ENCODE measurements at regions of chr5 and their contacts with region 1.

Region 1: DNA sequence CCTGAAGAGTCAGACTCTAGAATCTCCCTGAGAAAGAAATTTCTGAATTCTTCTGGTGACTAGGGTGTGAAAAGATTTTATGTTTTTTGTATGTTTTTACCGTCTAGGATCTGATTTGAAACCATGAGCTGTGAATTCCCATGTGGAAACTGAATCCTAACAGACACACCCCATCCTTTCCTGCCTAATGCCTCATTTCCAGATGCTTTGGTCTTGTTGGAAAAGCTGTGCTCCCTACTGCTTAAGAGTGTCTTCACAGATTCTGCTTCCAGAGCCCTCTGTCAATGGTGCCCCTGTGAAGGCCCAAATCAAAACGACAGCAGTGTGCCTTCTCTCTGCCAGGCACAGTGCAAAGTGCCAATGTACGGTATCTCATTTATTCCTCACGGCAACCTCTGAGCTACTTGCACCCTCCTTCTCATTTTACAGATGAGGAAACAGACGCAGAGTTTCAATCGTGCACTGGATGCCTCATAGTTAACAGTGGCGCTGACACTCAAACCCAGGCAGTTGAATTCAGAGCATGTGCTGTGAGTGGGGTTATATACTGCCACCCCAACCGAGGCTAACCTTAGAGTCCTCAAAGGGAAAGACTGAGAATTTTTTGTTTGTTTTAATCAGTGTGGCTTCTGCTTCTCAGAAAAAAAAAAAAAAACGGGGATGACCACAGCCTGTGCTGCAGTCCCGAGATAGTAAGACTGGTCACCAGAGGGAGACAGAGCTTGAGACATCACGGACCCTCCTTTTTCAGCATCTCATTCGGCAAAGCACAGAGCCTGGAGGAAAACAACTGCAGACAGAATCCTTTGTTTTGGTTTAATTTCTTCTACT is 188.4 kb downstream of the SNCAIP start:
- DNase-seq: no peak
- H3K4me3 ChIP-seq: no peak overlapping the region
- H3K27ac ChIP-seq: no peak overlapping the region
- H3K4me1 ChIP-seq: no peaks in the 10 kb centered on the region
- H3K27me3 ChIP-seq: no peaks in the 10 kb centered on the region
- CTCF ChIP-seq: peak in 3 of 4 experiments; percentile 19 to 31 (median 25)
- POLR2A ChIP-seq: no peak

Region 2: GRCh38 chr5:122192497-122193496 is 307.7 kb before region 1 on chr5:
- intact Hi-C with region 1: loop called (anchors 5 kb)
- DNase-seq: peak; percentile 67
- H3K4me3 ChIP-seq: no peak overlapping the region
- H3K27ac ChIP-seq: no peak overlapping the region
- H3K4me1 ChIP-seq: no peaks in the 10 kb centered on the region
- H3K27me3 ChIP-seq: no peaks in the 10 kb centered on the region
- CTCF ChIP-seq: peak in 3 of 4 experiments; percentile 55 to 70 (median 63)
- POLR2A ChIP-seq: no peak

Region 3: GRCh38 chr5:122332589-122333555 is 167.6 kb before region 1 on chr5:
- intact Hi-C with region 1: no loop called
- DNase-seq: peak; percentile 63
- H3K4me3 ChIP-seq: no peak overlapping the region
- H3K27ac ChIP-seq: no peak overlapping the region
- H3K4me1 ChIP-seq: no peaks in the 10 kb centered on the region
- H3K27me3 ChIP-seq: no peaks in the 10 kb centered on the region
- CTCF ChIP-seq: no peak
- POLR2A ChIP-seq: no peak

Region 4: GRCh38 chr5:123164054-123164453 is 663.6 kb after region 1 on chr5:
- intact Hi-C with region 1: loop called (anchors 10 kb)
- DNase-seq: no peak
- H3K4me3 ChIP-seq: no peak overlapping the region
- H3K27ac ChIP-seq: no peak overlapping the region
- H3K4me1 ChIP-seq: no peaks in the 10 kb centered on the region
- H3K27me3 ChIP-seq: no peaks in the 10 kb centered on the region
- CTCF ChIP-seq: no peak
- POLR2A ChIP-seq: no peak

Region 5: GRCh38 chr5:123610665-123611405 is 1110.4 kb after region 1 on chr5:
- intact Hi-C with region 1: loop called (anchors 10 kb)
- DNase-seq: peak; percentile 26
- H3K4me3 ChIP-seq: no peak overlapping the region
- H3K27ac ChIP-seq: no peak overlapping the region
- H3K4me1 ChIP-seq: no peaks in the 10 kb centered on the region
- H3K27me3 ChIP-seq: no peaks in the 10 kb centered on the region
- CTCF ChIP-seq: peak; percentile 81 to 95 (median 90)
- POLR2A ChIP-seq: no peak